Posterior cingulate gyrus (tissue), 11 donors: ENCODE measurements at regions of chr5 and their contacts with region 1.

Region 1: GRCh38 chr5:40679155-40679913 is 381 bp upstream of the PTGER4 start:
- DNase-seq: peak; percentile 46 to 94 (median 66)

Region 2: DNA sequence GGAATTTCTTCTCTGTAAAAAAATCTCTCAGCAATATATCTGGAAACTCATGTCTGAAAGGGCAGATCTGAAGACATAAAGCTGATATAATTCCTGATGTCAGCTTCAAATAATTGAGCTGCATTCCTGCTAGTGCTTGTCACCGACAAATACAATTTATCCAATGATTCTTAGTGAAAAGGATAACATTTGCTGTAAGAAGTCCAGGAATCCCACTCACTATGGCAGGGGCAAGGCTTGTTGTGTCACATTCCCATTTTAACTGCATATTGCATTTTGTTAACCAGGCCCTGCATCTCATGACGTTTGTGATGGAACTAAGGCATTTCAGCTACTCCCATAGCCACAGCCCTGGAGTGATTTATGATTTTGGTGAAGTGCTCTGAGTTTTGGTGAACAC is 1094.4 kb before region 1 on chr5:
- intact Hi-C with region 1: loop called (anchors 5 kb)
- DNase-seq: no peak

Region 3: DNA sequence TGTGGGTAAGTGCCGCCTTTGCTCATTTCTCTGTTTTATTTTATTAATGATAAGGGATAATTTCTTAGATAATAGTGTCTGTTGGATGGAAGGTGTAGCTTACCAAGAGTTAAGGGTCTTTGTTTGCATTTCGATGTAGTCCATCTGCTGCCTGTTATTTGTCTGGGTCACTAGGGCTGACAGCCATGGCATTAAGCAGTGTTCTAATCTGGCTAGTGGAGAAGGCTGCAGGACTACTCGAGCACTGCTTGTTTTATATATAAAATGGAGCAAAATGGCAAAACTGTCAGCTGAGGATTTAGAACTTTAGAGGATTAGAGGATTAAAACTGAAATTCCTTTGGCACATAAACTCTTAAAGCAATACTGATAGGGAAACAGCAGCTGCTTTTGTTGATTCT is 297.5 kb after region 1 on chr5:
- intact Hi-C with region 1: no loop called
- DNase-seq: no peak